CD4-positive, alpha-beta T cell (primary cell): ENCODE measurements at regions of chr11 and their contacts with region 1.

Region 1: DNA sequence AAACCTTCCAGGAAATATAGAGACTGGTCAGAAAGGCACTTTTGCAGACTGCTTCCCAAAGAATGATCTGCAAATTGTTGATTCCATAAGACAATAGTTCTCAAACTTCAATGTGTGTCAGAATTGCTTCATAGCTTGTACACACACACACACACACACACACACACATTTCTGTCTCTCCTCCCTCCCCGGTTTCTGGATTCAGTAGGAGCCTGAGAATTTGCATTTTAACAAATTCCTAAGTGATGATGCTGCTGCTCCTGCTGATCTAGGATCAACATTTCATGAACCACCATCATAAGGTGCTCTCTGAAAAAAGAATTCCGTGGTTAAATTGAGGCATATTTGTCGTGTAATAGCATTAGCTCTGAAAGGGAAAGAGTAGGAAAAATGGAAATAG is 35.3 kb upstream of the FZD4 start:
- DNase-seq: no peak
- ATAC-seq: no peak
- H3K4me3 ChIP-seq: no peak overlapping the region
- H3K4me3 Mint-ChIP-seq: no peak overlapping the region
- H3K27ac ChIP-seq: no peak overlapping the region
- H3K27ac Mint-ChIP-seq: no peak overlapping the region
- H3K4me1 ChIP-seq: no peaks in the 10 kb centered on the region
- H3K4me1 Mint-ChIP-seq: no peaks in the 10 kb centered on the region
- H3K27me3 ChIP-seq: peaks cover 0 to 3% of the 10 kb centered on the region in 2 experiments
- H3K27me3 Mint-ChIP-seq: peaks cover 4% of the 10 kb centered on the region
- CTCF ChIP-seq: no peak

Region 2: DNA sequence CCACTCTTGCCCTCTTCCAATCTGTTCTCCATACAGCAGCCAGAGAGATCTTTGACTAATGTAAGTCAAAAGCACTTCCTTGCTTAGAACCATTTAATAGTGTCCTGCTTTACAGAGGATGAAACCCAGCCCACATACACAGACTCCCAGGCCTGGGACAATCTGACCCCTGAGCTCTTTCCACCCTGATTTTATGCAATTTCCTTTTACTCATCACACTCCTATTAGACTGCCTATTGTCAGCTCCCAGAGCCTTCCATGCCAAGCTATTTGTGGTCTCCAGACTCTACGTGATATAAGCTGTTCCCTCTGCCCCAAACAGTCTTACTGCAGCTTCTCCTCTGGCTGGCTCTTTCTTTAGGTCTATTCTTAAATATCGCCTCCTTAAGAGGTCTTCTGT is 346.2 kb before region 1 on chr11:
- CTCF ChIA-PET with region 1: no interaction called
- POLR2A ChIA-PET with region 1: no interaction called
- intact Hi-C with region 1: loop called in 1 of 2 experiments (anchors 10 kb)
- DNase-seq: no peak
- ATAC-seq: no peak
- H3K4me3 ChIP-seq: no peak overlapping the region
- H3K4me3 Mint-ChIP-seq: no peak overlapping the region
- H3K27ac ChIP-seq: no peak overlapping the region
- H3K27ac Mint-ChIP-seq: no peak overlapping the region
- H3K4me1 ChIP-seq: no peaks in the 10 kb centered on the region
- H3K4me1 Mint-ChIP-seq: peaks cover 4% of the 10 kb centered on the region
- H3K27me3 ChIP-seq: no peaks in the 10 kb centered on the region
- H3K27me3 Mint-ChIP-seq: peaks cover 3% of the 10 kb centered on the region
- CTCF ChIP-seq: no peak